ENCODE measurements at regions of chr15 and their contacts with region 1.

Region 1: DNA sequence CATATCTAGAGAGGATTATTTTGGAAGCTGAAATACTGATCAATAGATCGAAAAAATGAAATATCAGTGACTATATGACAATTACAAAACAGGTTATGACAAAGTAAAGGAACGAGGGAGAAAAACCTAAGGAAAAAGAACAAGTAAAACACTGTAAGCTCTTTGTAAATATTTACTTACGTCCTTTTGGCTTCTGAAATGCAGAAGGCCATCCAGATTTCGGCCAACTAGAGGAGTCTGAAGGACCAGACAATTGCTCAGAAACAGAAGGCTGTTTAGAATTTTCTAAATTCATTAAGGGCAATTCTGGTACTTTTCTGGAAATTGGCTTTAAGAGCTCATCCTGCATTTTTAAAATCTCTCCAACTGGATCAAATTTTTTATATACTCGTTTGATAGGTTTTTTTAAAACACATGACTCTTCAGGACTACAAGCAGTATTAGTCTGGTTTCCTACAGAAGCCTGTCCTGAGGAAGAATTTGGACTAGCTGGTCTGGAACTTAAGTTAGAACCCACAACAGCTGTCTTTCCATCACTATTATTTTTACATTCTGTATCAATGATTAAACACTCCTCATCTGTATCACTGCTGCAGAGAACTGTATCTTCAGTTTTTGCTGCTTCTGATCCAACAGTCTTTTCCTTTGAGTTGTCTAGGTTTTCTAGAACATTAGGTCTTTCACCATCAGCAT is 30.1 kb downstream of the ICE2 start:
- DNase-seq: no peak
- H3K4me3 ChIP-seq: no peak overlapping the region
- H3K27ac ChIP-seq: no peak overlapping the region
- H3K4me1 ChIP-seq: no peaks in the 10 kb centered on the region
- H3K27me3 ChIP-seq: no peaks in the 10 kb centered on the region
- CTCF ChIP-seq: no peak
- POLR2A ChIP-seq: no peak

Region 2: GRCh38 chr15:60362321-60363086 is 86.3 kb before region 1 on chr15:
- intact Hi-C with region 1: loop called in 1 of 2 experiments (anchors 5 kb)
- DNase-seq: peak in 2 of 7 donors; percentile 39 to 43
- H3K4me3 ChIP-seq: no peak overlapping the region
- H3K27ac ChIP-seq: peak overlapping the region in 2 of 5 donors; percentile 52 to 54
- H3K4me1 ChIP-seq: peaks cover 10 to 38% of the 10 kb centered on the region in 2 donors
- H3K27me3 ChIP-seq: no peaks in the 10 kb centered on the region
- CTCF ChIP-seq: no peak
- POLR2A ChIP-seq: no peak